Uterus (tissue), 4 donors: ENCODE measurements at regions of chr9 and their contacts with region 1.

Region 1: DNA sequence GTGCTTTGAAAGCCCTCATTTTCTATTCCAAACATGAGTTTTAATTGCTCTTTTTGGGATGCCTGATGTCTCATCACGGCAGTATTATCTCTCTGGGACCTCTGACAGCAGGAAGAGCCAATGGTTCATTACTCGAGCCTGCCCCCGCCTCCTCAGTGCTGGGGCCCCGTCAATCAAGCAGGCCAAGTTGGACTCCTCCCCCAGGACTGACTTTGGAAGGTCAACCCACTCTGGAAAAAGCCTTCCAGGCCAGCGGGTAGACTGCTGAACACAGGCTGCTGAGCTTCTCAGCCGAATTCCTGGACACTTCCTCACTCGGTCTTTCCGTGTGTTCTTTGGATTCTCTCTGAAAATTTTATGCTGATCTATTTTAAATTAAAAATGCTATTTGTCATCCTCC is 9.5 kb upstream of the BARHL1 start:
- DNase-seq: no peak
- H3K4me3 ChIP-seq: no peak overlapping the region
- H3K27ac ChIP-seq: no peak overlapping the region
- H3K4me1 ChIP-seq: no peaks in the 10 kb centered on the region
- H3K27me3 ChIP-seq: no peaks in the 10 kb centered on the region
- CTCF ChIP-seq: no peak
- POLR2A ChIP-seq: no peak

Region 2: GRCh38 chr9:132525308-132525707 is 47.6 kb before region 1 on chr9:
- intact Hi-C with region 1: loop called (anchors 5 kb)
- DNase-seq: no peak
- H3K4me3 ChIP-seq: no peak overlapping the region
- H3K27ac ChIP-seq: no peak overlapping the region
- H3K4me1 ChIP-seq: no peaks in the 10 kb centered on the region
- H3K27me3 ChIP-seq: no peaks in the 10 kb centered on the region
- CTCF ChIP-seq: no peak
- POLR2A ChIP-seq: no peak

Region 3: GRCh38 chr9:132537352-132537751 is 35.6 kb before region 1 on chr9:
- intact Hi-C with region 1: no loop called
- DNase-seq: no peak
- H3K4me3 ChIP-seq: no peak overlapping the region
- H3K27ac ChIP-seq: no peak overlapping the region
- H3K4me1 ChIP-seq: no peaks in the 10 kb centered on the region
- H3K27me3 ChIP-seq: no peaks in the 10 kb centered on the region
- CTCF ChIP-seq: no peak
- POLR2A ChIP-seq: no peak

Region 4: DNA sequence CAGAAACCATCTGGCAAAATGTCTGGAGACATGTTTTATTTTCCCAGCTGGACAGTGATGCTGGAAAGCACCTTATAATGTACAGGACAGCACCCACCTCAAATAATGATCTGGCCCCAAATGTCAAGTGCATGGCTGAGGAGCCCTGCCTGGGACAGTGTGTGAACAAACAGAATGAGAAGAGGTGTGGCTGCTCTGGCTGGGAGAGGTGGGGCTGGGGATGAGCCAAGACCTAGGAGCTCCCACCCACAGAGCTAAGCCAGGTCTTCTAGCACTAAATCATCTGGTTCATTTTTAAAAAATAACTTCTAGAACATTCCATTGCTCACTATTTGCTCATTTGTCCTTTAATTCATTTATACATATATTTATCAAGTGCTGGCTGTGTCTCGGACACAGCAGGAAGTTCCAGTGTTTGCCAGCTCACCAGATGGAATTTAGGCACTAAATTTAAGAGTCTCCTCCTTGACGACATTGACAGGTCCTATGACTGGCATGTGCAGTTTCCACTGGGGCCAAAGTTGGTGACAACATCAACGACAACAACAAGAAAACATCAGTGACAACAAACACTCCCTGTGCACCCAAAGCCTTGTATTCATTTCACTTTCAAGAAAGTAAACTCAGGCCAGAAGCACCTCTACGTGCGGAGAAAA is 156.4 kb after region 1 on chr9:
- intact Hi-C with region 1: no loop called
- DNase-seq: no peak
- H3K4me3 ChIP-seq: no peak overlapping the region
- H3K27ac ChIP-seq: no peak overlapping the region
- H3K4me1 ChIP-seq: no peaks in the 10 kb centered on the region
- H3K27me3 ChIP-seq: no peaks in the 10 kb centered on the region
- CTCF ChIP-seq: no peak
- POLR2A ChIP-seq: no peak